Dorsolateral prefrontal cortex (tissue), 120 donors: ENCODE measurements at regions of chr5 and their contacts with region 1.

Region 1: GRCh38 chr5:14364576-14365472 is 216.8 kb upstream of the OTULINL start:
- DNase-seq: no peak
- H3K4me3 ChIP-seq: no peak overlapping the region
- H3K27ac ChIP-seq: peak overlapping the region in 5 of 59 donors; percentile 2 to 57 (median 11)
- H3K27me3 ChIP-seq: no peaks in the 10 kb centered on the region
- CTCF ChIP-seq: peak in 24 of 56 donors; percentile 1 to 51 (median 24)

Region 2: DNA sequence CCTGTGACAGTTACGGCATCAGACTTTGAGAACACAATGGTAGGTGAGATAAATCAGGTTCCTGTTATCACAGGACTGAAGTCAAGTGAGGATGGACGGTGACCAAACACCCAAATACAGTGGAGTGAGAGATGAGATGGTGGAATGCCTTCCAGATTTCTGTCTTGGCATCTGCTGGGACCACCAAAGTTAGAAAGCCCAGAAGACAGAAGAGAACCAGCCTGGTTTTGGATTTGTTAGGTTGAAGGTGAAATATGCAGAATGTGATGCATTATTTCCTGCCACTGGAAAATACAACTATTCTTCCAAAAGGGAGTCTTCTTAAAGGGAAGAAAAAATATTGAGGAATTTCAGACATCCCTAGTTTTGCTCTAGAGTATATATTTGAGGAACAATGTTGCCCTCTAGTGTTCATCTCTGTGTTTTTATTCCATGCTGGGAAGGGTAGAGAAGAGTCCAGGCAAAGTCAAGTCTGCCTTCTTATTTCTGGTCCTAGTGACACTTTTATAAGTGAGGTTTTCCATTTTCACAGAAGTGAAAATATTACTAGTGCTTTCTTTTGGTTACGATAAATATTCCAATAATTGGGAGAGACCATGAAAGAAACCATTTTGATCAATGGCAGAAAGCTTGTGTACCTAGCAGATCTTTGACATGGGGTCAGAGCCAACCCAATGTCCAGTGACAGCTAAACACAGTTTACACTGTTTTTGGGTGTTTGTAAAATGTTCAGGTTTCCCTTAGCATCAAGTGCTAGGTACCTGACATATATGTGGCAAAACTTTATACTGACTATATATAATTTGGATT is 649.0 kb after region 1 on chr5:
- intact Hi-C with region 1: loop called in 1 of 2 experiments (anchors 10 kb)
- DNase-seq: no peak
- H3K4me3 ChIP-seq: no peak overlapping the region
- H3K27ac ChIP-seq: no peak overlapping the region
- H3K27me3 ChIP-seq: no peaks in the 10 kb centered on the region
- CTCF ChIP-seq: peak; percentile 61 to 92 (median 78)